ENCODE measurements at regions of chr9 and their contacts with region 1.

Region 1: GRCh38 chr9:131709771-131710454 is 30.0 kb downstream of the RAPGEF1 start:
- DNase-seq: peak; percentile 50
- H3K4me3 Mint-ChIP-seq: peak overlapping the region; percentile 22
- H3K27ac Mint-ChIP-seq: peak overlapping the region; percentile 51
- H3K4me1 Mint-ChIP-seq: peaks cover 69% of the 10 kb centered on the region
- H3K27me3 Mint-ChIP-seq: no peaks in the 10 kb centered on the region

Region 2: DNA sequence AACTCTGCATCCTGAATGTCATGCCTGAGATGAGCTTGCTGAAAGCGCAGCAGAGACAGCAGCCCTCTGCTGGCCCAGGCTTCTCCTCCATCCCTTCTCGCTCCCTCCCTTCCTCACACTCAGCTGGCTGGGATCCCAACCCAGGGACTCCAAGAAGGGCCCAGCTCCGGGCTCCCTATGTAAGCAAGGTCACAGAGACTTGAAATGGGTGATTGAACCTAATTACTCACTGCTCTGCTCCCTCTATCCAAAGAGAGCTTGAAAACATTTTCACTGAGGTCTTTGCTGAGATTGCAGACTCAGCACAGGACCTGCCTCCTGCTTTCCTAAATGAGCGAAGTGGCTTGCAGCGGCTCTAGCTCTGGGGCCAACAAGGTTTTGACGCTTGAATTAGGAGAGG is 12.8 kb before region 1 on chr9:
- CTCF ChIA-PET with region 1: interaction called, 14 read pairs
- POLR2A ChIA-PET with region 1: no interaction called
- DNase-seq: no peak
- H3K4me3 Mint-ChIP-seq: no peak overlapping the region
- H3K27ac Mint-ChIP-seq: no peak overlapping the region
- H3K4me1 Mint-ChIP-seq: peaks cover 74% of the 10 kb centered on the region
- H3K27me3 Mint-ChIP-seq: no peaks in the 10 kb centered on the region